Activated CD4-positive, alpha-beta T cell treated with anti-CD3 and anti-CD28 coated beads, Interleukin-2, amount 10 ng/mL, durations not matched to agents 24 days and 14 days (primary cell): ENCODE measurements at regions of chr18 and their contacts with region 1.

Region 1: DNA sequence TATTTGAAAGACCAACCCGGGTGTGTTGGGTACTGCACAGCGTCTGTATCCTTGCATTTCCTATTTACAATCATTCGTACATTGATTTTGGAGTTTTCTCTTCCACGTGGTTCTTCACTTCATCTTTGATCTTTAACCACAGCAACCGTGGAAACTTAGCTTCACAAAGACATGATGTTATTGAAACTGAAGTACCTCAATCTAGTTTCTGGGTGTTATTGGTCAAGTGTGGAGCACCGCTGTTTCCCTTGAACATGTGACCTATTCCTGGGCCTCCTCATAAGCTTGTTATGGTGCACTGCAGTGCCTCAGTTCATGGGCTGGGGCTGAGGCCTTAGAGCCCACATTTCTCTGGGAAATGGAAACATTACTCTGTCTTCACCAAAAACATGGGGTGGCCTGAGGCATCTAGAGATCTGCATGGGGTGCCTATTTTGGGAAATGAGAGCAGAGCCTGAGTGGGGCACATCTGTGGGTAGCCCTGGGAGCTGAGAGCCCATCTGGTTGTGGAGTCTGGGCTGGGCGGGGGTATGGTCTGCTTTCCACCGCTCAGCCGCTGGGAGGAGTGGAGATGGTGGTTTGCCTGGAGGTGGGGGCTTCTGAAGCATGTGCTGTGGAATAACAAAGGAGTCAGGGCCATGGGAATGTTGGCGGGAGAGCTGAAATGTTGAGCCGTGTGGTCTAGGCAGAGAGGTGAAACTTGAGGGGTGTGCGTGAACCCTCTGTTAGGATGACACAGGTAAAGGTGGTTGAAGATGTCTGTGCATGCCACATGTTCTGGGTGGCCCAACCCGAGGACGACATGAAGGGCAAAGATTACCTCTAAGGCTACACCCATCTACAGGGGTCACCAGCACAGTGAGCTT is 37.4 kb downstream of the ZNF236 start:
- DNase-seq: peak; percentile 83
- H3K4me3 Mint-ChIP-seq: peak overlapping the region; percentile 71
- H3K27ac Mint-ChIP-seq: peak overlapping the region; percentile 92
- H3K4me1 Mint-ChIP-seq: peaks cover 28% of the 10 kb centered on the region
- H3K27me3 Mint-ChIP-seq: no peaks in the 10 kb centered on the region

Region 2: DNA sequence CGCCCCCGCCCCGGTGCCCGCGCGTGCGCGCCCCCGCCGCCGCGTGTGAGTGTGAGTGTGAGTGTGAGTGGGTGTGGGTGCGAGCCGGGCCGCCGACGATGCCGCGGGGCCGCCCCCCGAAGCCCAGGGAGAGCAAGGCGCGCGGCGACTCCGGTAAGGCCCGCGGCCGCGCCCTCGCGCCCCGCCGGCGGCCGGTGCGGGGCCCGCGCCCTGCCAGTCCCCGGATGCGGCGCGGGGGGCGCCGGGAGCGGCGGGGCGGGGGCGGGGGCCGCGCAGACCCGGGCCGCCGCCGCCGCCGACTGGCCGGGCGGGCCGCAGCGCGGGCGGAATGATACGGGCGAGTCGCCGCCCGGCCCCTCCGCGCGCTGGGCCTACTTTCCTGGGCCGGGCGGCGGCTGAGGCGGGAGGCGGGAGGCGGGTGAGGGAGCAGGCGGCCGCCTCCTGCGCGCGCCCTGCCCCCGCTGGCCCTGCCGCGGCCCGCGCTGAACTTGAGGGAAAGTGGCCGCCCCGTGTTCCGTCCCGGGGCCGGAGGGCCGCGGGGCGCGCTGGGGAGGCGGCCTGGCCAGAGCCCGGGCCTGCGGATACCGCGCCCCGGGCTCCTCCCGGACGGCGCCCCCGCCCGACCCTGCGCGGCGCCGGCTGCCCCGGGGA is 37.1 kb before region 1 on chr18 and contains the start of gene ZNF236:
- intact Hi-C with region 1: loop called (anchors 1 kb)
- DNase-seq: peak; percentile 90
- H3K4me3 Mint-ChIP-seq: peak within 1 kb of the TSS; percentile 95
- H3K27ac Mint-ChIP-seq: peak within 1 kb of the TSS; percentile 95
- H3K4me1 Mint-ChIP-seq: peaks cover 43% of the 10 kb centered on the region
- H3K27me3 Mint-ChIP-seq: no peaks in the 10 kb centered on the region
- total RNA-seq, gene ZNF236: 17.5 and 22.0 TPM in 2 replicates

Region 3: DNA sequence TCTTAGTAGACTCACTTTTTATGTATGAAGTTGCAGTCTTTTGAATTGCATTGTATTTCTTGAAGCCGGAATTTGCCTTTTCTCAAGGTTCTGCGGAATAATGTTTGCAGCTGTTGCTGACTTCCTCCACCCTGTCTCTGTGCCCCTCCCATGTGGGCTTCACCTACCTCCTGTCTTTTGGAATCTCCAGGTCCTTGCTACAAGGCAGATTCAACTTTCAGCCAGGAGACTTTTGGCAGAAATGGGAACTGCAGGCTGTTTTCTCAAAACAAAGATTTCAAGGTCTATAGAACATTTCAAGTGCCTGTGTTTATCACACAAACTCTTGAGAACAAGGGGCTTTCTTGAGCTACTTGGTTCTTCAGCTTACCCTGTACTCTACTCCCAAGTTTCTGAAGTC is 11.8 kb before region 1 on chr18:
- intact Hi-C with region 1: loop called (anchors 1 kb)
- DNase-seq: no peak
- H3K4me3 Mint-ChIP-seq: no peak overlapping the region
- H3K27ac Mint-ChIP-seq: no peak overlapping the region
- H3K4me1 Mint-ChIP-seq: peaks cover 10% of the 10 kb centered on the region
- H3K27me3 Mint-ChIP-seq: no peaks in the 10 kb centered on the region

Region 4: GRCh38 chr18:76875390-76876325 is 16.0 kb after region 1 on chr18:
- intact Hi-C with region 1: loop called (anchors 2 kb)
- DNase-seq: peak; percentile 84
- H3K4me3 Mint-ChIP-seq: no peak overlapping the region
- H3K27ac Mint-ChIP-seq: peak overlapping the region; percentile 22
- H3K4me1 Mint-ChIP-seq: peaks cover 13% of the 10 kb centered on the region
- H3K27me3 Mint-ChIP-seq: no peaks in the 10 kb centered on the region

Region 5: GRCh38 chr18:77061946-77062517 is 202.3 kb after region 1 on chr18:
- intact Hi-C with region 1: loop called (anchors 2 kb)
- DNase-seq: peak; percentile 83
- H3K4me3 Mint-ChIP-seq: peak overlapping the region; percentile 67
- H3K27ac Mint-ChIP-seq: peak overlapping the region; percentile 97
- H3K4me1 Mint-ChIP-seq: peaks cover 81% of the 10 kb centered on the region
- H3K27me3 Mint-ChIP-seq: no peaks in the 10 kb centered on the region